BJ (cell line): ENCODE measurements at regions of chr14 and their contacts with region 1.

Region 1: DNA sequence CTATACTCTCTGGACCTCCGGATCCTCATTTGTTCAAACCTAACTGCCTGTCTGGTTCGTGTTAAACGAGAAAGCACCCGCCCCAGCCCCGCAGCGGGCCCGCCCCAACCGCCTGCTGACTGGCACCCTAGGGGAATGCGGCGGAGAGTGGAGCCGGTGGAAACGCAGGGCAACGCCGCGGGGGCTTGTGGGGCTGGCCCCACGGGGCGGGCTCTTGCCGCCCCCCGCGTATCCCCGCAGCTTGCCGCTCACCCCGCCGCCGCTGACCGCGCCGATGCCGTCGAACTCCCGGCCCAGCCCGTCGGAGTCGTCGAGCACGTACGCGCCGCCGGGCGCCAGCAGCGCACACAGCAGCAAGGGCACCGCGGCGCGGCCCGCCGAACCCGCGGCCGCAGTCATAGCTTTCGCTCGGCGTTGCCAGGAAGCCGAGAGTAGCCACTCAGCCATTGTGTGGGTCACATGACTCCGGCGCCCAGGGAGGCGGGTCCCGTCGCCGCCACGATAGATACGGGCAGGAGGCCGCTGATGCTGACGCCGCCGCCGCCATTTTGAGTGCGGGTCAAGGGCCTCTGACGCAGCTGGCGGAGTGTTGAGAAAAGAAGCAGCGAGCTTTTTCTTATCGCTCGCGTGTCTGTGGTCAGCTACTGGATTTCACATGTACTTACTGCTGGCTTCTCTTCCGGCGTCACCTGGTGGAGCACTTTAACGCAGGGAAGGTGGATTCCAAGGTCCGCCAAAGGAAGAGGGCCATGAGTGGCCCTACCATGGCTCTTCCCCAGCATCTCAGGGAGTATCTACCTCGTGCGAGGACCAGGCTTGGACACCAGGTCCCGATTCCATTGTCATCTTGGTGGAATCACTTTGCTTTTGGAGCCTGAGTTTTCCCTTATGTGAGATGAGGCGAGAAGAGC is at the start of gene GALC:
- DNase-seq: peak; percentile 32
- H3K4me3 ChIP-seq: peak within 1 kb of the TSS; percentile 58
- H3K27me3 ChIP-seq: no peaks in the 10 kb centered on the region
- CTCF ChIP-seq: no peak
- polyA plus RNA-seq, gene GALC: 8.2 and 13.5 TPM in 2 replicates

Region 2: GRCh38 chr14:87916103-87916885 is 76.7 kb before region 1 on chr14:
- CTCF ChIA-PET with region 1: no interaction called
- POLR2A ChIA-PET with region 1: no interaction called
- DNase-seq: no peak
- H3K4me3 ChIP-seq: no peak overlapping the region
- H3K27me3 ChIP-seq: no peaks in the 10 kb centered on the region
- CTCF ChIP-seq: no peak

Region 3: GRCh38 chr14:88385345-88386101 is 392.6 kb after region 1 on chr14 and contains the start of gene SPATA7:
- CTCF ChIA-PET with region 1: no interaction called
- POLR2A ChIA-PET with region 1: interaction called, 14 read pairs
- DNase-seq: peak; percentile 36
- H3K4me3 ChIP-seq: peak within 1 kb of the TSS; percentile 94
- H3K27me3 ChIP-seq: peaks cover 2% of the 10 kb centered on the region; the same call in 1 of the 2 replicates
- CTCF ChIP-seq: no peak
- polyA plus RNA-seq, gene SPATA7: 4.9 and 7.8 TPM in 2 replicates